ENCODE measurements at regions of chr5 and their contacts with region 1.

Region 1: DNA sequence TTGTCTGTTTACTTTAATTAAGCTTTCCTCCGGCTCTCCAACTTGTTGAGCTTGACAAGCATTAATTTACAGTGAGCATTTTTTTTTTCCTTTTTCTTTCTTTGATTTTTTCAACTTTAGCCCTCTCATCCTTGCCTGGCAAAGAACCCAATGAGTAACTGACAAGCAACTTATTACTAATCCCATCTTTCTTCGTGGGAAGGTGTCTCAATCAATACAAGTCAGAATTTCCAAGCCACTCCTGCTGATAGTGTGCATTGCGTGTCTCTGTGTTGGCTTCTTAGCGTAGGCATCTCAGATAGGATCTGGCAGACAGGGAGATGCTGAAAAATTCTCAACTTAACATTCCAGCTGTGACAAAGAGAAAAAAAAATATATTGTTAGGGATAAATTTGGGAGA is 527.7 kb upstream of the WWC1 start:
- DNase-seq: peak; percentile 85
- H3K4me3 ChIP-seq: no peak overlapping the region
- H3K27ac ChIP-seq: peak overlapping the region; percentile 55
- H3K4me1 ChIP-seq: peaks cover 34% of the 10 kb centered on the region
- H3K27me3 ChIP-seq: no peaks in the 10 kb centered on the region
- CTCF ChIP-seq: no peak

Region 2: GRCh38 chr5:167709625-167710024 is 54.1 kb before region 1 on chr5:
- CTCF ChIA-PET with region 1: no interaction called
- dilution Hi-C with region 1: loop called (anchors 5 kb)
- in situ Hi-C with region 1: no loop called
- intact Hi-C with region 1: no loop called
- DNase-seq: no peak
- H3K4me3 ChIP-seq: no peak overlapping the region
- H3K27ac ChIP-seq: no peak overlapping the region
- H3K4me1 ChIP-seq: peaks cover 15% of the 10 kb centered on the region
- H3K27me3 ChIP-seq: no peaks in the 10 kb centered on the region
- CTCF ChIP-seq: no peak

Measured in mammary epithelial cell (primary cell).